Caco-2 (cell line): ENCODE measurements at regions of chr1 and their contacts with region 1.

Region 1: DNA sequence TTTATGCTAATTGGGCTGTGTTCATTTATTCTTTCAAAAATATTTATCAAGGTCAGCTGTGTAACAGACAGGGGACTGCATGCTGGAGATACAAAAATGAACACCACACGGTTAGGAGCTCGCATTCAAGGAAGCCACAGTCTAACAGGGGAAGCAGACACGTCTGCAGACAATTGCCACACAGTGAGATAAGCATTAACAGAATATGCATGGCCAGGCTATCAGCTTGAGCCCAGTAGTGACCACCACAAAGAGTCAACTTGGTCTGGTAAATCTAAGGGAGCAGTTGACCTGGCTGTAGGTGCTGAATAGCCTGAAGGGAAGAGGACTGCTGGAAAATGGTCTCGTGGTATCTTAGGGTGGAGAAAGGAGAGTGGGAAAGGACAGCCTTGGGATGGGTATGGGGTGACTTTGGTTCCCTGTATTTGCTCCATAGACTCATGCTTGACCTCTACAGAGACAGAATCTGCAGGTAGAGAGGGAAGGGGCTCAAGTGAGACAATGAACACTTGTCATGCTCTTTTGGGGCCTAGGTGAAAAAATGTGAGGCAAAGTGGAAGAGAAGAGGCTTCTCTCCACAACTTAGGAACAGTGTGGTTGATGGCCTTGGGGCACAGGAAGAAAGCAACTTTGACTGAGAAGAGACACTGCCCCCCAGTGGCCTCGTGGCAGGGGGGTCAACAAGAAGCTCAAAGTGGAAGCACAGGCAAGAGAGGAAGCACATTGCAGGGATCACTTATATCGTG is 7.6 kb upstream of the NPL start:
- DNase-seq: peak; percentile 74 to 78
- H3K4me3 ChIP-seq: no peak overlapping the region
- H3K4me3 Mint-ChIP-seq: no peak overlapping the region
- H3K27ac Mint-ChIP-seq: no peak overlapping the region
- H3K4me1 ChIP-seq: no peaks in the 10 kb centered on the region
- H3K4me1 Mint-ChIP-seq: peaks cover 11% of the 10 kb centered on the region
- H3K27me3 ChIP-seq: no peaks in the 10 kb centered on the region; the same call in 1 of the 2 replicates
- H3K27me3 Mint-ChIP-seq: peaks cover 2% of the 10 kb centered on the region
- CTCF ChIP-seq: peak; percentile 81 to 90

Region 2: GRCh38 chr1:182446033-182446669 is 335.9 kb before region 1 on chr1:
- CTCF ChIA-PET with region 1: no interaction called
- POLR2A ChIA-PET with region 1: no interaction called
- intact Hi-C with region 1: loop called (anchors 1 kb)
- DNase-seq: peak in 1 of 2 experiments; percentile 53
- H3K4me3 ChIP-seq: no peak overlapping the region
- H3K4me3 Mint-ChIP-seq: no peak overlapping the region
- H3K27ac Mint-ChIP-seq: no peak overlapping the region
- H3K4me1 ChIP-seq: no peaks in the 10 kb centered on the region
- H3K4me1 Mint-ChIP-seq: no peaks in the 10 kb centered on the region
- H3K27me3 ChIP-seq: no peaks in the 10 kb centered on the region
- H3K27me3 Mint-ChIP-seq: no peaks in the 10 kb centered on the region
- CTCF ChIP-seq: peak; percentile 62 to 77

Region 3: DNA sequence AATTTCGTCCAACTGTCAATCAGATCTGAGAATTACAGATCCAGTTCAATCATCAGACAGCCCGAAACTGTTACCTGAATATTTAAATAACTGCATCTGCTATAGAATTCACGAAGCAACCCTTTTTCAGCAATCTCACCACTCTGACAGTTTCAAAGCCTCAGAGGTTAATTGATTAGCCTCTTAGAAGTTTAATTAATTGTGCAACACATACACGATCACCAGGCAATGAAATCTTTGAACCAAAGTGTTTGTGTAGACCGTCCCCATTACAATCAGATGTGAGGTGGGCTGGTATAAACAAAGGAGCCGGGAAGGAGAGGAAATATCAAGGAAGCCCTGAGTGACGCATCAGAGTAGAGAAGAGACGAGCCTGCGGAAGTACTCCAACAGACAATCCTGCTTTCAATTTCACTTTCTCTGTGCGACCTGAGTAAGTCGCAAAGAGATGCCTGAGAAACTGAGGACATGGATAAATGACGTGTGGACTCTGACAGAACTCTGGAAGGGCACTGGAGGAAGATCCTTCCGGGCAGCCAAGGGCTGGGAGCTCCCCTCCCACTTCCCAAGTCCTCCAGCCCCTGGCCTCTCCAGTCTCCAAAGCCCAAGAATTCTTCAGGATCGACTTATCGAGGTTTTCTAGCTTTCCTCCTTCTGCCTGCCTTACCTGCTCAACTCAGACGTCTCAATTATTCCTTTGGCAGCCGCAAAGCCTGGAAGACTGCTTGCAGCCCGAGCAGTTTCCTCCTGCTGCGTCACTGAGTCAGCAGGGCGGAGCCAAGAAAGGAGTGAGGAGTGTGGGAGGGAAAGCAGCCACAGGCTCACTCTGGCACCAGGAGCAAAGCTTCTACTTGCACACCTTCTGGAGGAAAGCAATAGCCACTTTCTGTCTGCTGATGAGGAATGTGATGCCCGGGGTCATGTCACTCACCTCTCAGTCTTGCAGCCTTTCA is 193.2 kb before region 1 on chr1 and contains the start of gene RNASEL:
- CTCF ChIA-PET with region 1: interaction called, 265 read pairs
- POLR2A ChIA-PET with region 1: no interaction called
- intact Hi-C with region 1: no loop called
- DNase-seq: peak; percentile 63 to 66
- H3K4me3 ChIP-seq: peak within 1 kb of the TSS; percentile 41
- H3K4me3 Mint-ChIP-seq: peak within 1 kb of the TSS; percentile 88
- H3K27ac Mint-ChIP-seq: peak within 1 kb of the TSS; percentile 85
- H3K4me1 ChIP-seq: no peaks in the 10 kb centered on the region
- H3K4me1 Mint-ChIP-seq: no peaks in the 10 kb centered on the region
- H3K27me3 ChIP-seq: no peaks in the 10 kb centered on the region
- H3K27me3 Mint-ChIP-seq: no peaks in the 10 kb centered on the region
- CTCF ChIP-seq: no peak
- total RNA-seq, gene RNASEL: 2.7 and 2.9 TPM in 2 replicates

Region 4: DNA sequence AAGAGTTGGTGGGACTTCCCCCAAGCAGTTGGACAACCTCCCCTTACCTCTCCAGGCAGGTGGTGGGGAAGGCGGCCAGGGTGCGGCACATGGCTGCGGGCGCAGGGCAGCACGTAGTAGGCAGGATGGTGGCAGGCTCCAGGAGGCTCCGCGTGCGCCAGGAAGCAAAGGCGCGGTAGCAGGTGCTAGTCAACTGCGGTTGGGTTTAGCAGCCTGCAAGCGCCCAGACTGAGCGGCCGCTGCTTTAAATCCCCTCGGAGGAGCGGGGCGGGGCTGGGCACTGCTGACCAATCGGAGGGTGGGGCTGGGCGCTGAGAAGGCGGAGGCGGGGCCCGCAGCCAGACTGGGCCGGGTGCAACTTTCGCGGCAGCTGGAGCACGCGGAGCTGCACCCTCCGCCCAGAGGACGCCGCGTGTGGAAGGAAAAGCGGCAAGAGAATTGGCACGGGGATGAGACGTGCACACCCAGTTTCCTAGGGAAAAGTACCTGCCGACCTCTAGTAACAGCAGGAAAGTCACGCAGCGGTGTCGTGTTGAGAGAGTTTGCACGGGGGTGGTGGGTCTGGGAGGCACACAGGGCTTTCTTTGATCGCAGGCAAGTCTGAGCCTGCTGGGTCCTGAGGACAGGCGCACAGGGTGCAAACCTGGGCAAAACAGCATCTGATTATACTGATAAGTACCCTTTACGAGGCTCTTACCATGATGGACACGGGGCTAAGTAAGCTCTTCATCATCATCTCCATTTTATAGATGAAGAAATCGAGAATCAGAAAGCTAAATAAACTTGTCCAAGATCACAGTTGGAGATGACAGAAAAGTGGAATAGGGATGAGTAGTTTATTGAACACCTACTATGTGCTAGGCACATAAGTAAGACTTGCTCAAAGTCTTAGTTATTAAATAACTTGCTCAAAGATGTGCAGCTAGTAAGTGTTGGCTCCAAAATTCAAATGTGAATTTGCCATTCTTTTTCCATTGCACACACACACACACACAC is 177.5 kb before region 1 on chr1 and contains the start of gene RGS16:
- CTCF ChIA-PET with region 1: interaction called, 265 read pairs
- POLR2A ChIA-PET with region 1: interaction called, 3 read pairs
- intact Hi-C with region 1: loop called (anchors 1 kb)
- DNase-seq: peak; percentile 87 to 89
- H3K4me3 ChIP-seq: peak within 1 kb of the TSS; percentile 65
- H3K4me3 Mint-ChIP-seq: peak within 1 kb of the TSS; percentile 73
- H3K27ac Mint-ChIP-seq: peak within 1 kb of the TSS; percentile 19
- H3K4me1 ChIP-seq: peaks cover 5% of the 10 kb centered on the region; the same call in 1 of the 2 replicates
- H3K4me1 Mint-ChIP-seq: no peaks in the 10 kb centered on the region
- H3K27me3 ChIP-seq: no peaks in the 10 kb centered on the region
- H3K27me3 Mint-ChIP-seq: no peaks in the 10 kb centered on the region
- CTCF ChIP-seq: no peak
- total RNA-seq, gene RGS16: 0.77 and 1.2 TPM in 2 replicates

Region 5: GRCh38 chr1:182674346-182675246 is 107.4 kb before region 1 on chr1:
- CTCF ChIA-PET with region 1: interaction called, 4 read pairs
- POLR2A ChIA-PET with region 1: no interaction called
- intact Hi-C with region 1: loop called (anchors 1 kb)
- DNase-seq: peak in 1 of 2 experiments; percentile 15
- H3K4me3 ChIP-seq: no peak overlapping the region
- H3K4me3 Mint-ChIP-seq: no peak overlapping the region
- H3K27ac Mint-ChIP-seq: no peak overlapping the region
- H3K4me1 ChIP-seq: no peaks in the 10 kb centered on the region; the same call in 1 of the 2 replicates
- H3K4me1 Mint-ChIP-seq: peaks cover 12% of the 10 kb centered on the region
- H3K27me3 ChIP-seq: no peaks in the 10 kb centered on the region
- H3K27me3 Mint-ChIP-seq: no peaks in the 10 kb centered on the region
- CTCF ChIP-seq: no peak

Region 6: GRCh38 chr1:182718311-182718710 is 63.7 kb before region 1 on chr1:
- CTCF ChIA-PET with region 1: interaction called, 4 read pairs
- POLR2A ChIA-PET with region 1: no interaction called
- intact Hi-C with region 1: loop called (anchors 5 kb)
- DNase-seq: no peak
- H3K4me3 ChIP-seq: no peak overlapping the region
- H3K4me3 Mint-ChIP-seq: no peak overlapping the region
- H3K27ac Mint-ChIP-seq: peak overlapping the region; percentile 87
- H3K4me1 ChIP-seq: peaks cover 5% of the 10 kb centered on the region; the same call in 1 of the 2 replicates
- H3K4me1 Mint-ChIP-seq: peaks cover 18% of the 10 kb centered on the region
- H3K27me3 ChIP-seq: no peaks in the 10 kb centered on the region
- H3K27me3 Mint-ChIP-seq: no peaks in the 10 kb centered on the region
- CTCF ChIP-seq: no peak

Region 7: DNA sequence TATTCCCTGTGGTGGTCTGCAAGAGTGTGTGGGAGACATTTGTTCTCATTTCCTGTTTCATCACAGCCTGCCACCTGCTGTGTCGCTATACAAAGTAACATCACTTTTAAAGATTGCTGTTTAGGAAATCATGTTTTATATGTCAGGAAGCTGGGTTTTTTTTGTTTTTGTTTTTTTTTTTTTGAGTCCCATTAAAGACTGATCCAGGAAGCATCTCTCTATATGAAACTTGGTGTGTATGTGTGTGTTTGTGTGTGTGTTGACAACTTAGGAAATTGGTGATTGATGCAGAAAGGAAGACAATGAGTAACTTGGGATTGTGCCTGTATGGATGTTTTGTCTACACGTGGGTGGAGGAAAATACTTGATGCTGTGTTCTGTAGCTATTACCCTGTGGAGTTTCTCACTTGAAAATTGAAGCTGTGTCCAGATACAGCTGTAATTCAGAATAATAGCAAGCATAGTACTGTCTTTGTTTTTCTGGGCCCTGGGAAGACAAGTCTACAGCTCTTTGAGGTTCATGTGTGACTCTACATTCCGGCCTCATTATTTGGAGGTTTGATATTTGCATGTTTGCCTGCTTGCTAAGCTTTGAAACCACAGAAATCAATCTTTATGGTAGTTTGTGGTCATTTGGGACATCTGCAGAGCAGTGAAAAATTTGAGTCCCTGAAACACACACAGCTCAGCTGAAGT is 289.1 kb after region 1 on chr1:
- CTCF ChIA-PET with region 1: no interaction called
- POLR2A ChIA-PET with region 1: no interaction called
- intact Hi-C with region 1: no loop called
- DNase-seq: no peak
- H3K4me3 ChIP-seq: no peak overlapping the region
- H3K4me3 Mint-ChIP-seq: no peak overlapping the region
- H3K27ac Mint-ChIP-seq: no peak overlapping the region
- H3K4me1 ChIP-seq: peaks cover 23% of the 10 kb centered on the region
- H3K4me1 Mint-ChIP-seq: peaks cover 30% of the 10 kb centered on the region
- H3K27me3 ChIP-seq: no peaks in the 10 kb centered on the region
- H3K27me3 Mint-ChIP-seq: no peaks in the 10 kb centered on the region
- CTCF ChIP-seq: no peak